Heart right ventricle (tissue), 16 donors: ENCODE measurements at regions of chr4 and their contacts with region 1.

Region 1: DNA sequence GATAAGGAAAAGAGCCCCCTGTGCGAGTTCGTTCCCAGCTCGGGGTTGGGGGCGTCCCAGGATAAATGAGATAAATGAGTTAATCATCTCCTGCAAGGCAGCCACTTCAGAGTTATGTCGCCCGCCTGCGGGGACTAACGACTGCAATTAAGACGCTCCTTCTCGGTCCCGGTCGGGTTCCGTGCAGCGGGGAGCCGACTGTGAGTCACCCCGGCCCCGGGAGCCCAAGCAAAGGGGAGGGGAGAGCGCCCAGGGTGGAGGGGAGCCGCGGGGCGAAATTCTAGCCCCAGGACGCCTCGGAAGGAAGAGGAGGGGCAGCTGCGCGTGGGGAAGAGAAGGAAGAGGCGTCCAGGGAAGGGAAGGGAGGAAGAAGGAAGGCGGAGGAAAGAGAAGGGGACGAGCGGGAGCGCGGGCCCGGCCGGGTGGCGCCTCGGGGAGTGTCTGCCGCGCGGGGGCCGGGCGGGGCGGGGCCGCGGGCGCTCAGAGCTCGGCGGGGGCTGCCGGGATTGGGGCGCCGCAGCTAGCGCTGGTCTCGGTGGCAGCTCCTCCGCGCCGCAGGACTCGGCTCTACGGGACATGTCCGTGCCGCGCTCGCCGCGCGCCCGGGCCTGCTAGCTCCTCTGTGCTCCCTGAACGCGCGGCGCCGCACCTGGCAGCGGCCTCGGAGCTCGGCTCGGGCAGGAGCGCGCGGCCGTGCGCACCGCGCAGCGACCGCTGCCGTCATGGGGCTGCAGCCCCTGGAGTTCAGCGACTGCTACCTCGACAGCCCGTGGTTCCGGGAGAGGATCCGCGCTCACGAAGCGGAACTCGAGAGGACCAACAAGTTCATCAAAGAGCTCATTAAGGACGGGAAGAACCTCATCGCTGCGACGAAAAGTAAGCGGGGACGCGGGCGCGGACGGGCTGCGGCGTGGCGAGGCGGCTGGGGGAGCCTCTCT is at the start of gene ARHGAP10:
- DNase-seq: peak; percentile 67 to 81
- ATAC-seq: peak; percentile 72 to 90 (median 84)
- H3K4me3 ChIP-seq: peak within 1 kb of the TSS; percentile 44 to 93 (median 78)
- H3K27ac ChIP-seq: peak within 1 kb of the TSS; percentile 86 to 95 (median 92)
- H3K4me1 ChIP-seq: peaks cover 0 to 54% (median 23%) of the 10 kb centered on the region in 9 donors
- H3K27me3 ChIP-seq: peaks cover 0 to 5% (median 0%) of the 10 kb centered on the region in 7 donors
- CTCF ChIP-seq: no peak
- total RNA-seq, gene ARHGAP10: 33.9 to 71.1 (median 60.7) TPM

Region 2: DNA sequence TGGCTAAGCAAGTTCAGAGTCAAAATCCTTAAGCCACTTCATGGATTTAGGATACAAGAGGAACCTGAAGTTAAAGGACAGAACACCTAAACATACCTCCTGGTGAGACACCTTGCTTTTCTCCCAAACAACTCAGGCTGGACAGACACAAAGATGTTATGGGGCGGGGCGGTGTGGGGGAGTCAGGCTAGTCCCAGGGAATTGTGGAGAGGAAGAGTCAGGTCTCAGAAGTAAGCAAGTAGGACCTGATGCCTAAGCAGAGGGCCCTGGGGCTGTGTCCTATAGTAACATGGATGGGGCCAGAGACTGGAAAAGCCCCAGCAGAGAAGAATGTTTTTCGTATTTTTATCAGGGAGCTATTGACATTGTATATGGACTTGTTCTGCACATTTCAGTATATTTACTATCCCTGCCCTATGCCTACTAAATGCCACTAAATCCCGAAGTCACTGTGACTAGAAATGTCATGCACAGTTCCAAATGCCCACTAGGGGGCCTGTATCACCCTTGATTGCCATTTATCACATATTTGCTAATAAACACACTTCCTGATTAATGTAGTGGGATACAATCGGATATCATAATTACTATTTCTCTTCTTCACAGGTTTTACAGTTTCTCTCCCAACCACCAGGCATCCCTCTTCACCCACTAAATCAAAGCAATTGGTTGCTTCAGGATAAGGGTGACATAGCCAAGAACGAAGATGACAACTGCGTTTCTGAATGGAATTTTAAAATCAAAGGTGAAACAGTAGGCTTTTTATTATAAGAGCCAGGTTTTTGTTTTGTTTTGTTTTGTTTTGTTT is 23.8 kb before region 1 on chr4:
- intact Hi-C with region 1: loop called in 1 of 10 experiments (anchors 1 kb)
- DNase-seq: peak in 1 of 2 donors; percentile 43
- ATAC-seq: peak; percentile 54 to 75 (median 64)
- H3K4me3 ChIP-seq: peak overlapping the region in 2 of 10 donors; percentile 16 to 25
- H3K27ac ChIP-seq: no peak overlapping the region
- H3K4me1 ChIP-seq: peaks cover 0 to 8% (median 0%) of the 10 kb centered on the region in 9 donors
- H3K27me3 ChIP-seq: no peaks in the 10 kb centered on the region
- CTCF ChIP-seq: peak; percentile 80 to 90 (median 86)

Region 3: DNA sequence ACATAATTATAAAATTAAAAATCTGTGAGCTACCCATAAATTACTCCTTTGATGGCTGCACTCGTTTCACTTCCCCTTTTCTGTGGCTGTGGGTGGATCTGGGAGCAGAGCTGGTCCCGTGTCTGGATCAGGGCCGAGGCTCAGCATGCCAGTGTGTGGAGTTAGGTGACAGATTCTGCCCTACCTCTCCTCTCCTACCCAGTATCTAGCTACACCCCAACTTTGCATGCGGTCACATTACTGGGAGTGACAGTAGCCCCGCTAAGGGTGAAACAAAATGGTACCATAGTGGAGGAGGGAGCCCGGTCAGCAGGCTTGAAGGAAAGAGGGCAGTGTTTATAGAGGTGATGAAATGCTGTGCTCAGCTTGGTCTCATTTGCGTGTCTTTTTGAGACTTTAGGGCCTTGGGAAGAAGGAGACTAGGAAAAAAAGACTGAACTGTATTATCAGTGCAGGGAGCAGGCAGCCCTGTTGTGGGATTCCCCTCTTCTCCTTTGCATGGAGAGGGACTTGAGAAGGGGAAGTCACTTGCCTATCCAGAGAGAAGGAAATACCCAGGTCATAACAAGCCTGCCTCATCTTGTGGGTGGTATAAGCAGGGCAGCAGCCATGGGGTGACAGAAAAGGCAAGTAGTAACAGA is 48.4 kb after region 1 on chr4:
- intact Hi-C with region 1: loop called in 2 of 10 experiments (anchors 5 to 10 kb)
- DNase-seq: no peak
- ATAC-seq: peak; percentile 13 to 59 (median 50)
- H3K4me3 ChIP-seq: peak overlapping the region in 1 of 10 donors; percentile 27
- H3K27ac ChIP-seq: peak overlapping the region in 3 of 10 donors; percentile 43 to 85 (median 58)
- H3K4me1 ChIP-seq: peaks cover 6 to 71% (median 51%) of the 10 kb centered on the region in 9 donors
- H3K27me3 ChIP-seq: no peaks in the 10 kb centered on the region
- CTCF ChIP-seq: no peak

Region 4: DNA sequence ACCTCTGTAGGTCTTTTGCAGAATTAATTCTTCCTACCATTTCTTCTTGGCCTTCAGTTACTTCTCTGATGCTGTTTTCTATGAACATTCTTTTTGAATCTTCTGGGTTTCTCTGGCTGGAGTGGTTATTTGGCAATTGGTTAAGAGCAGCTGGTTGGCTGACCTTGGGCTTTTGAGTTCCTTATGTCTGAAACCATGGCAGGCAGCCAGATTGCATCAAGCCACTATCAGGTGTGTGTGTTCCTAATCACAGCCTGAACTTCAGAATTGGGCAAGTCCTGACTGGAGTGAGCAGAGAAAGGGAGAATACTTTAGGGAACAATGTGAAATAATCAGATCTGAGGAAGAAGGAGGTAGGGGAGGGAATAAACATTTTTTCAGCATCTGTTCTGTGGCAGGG is 90.3 kb after region 1 on chr4:
- intact Hi-C with region 1: loop called in 2 of 10 experiments (anchors 5 kb)
- DNase-seq: peak; percentile 63 to 84
- ATAC-seq: peak; percentile 53 to 85 (median 72)
- H3K4me3 ChIP-seq: no peak overlapping the region
- H3K27ac ChIP-seq: peak overlapping the region; percentile 48 to 93 (median 68)
- H3K4me1 ChIP-seq: peaks cover 5 to 88% (median 60%) of the 10 kb centered on the region in 9 donors
- H3K27me3 ChIP-seq: no peaks in the 10 kb centered on the region
- CTCF ChIP-seq: peak in 1 of 9 donors; percentile 7

Region 5: DNA sequence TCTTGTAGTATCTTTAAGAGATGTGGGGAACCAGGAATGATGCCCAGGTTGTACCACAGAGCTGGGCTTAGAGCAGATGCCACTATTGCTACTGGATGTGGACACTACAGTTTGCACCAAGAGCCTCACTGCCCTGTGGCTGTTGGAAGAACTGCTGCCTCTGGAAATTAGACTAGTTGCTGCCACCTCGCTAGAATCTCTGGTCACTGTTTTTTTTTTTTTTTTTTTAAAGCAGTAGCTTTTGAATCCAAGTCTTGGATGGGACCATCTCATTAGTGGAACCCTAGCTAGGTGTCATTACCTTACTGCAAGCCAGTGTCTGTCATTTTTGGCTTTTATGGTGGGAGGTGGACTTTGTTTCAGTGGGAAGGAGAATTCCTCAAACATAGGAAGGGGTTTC is 105.6 kb after region 1 on chr4:
- intact Hi-C with region 1: loop called in 5 of 10 experiments (anchors 5 to 10 kb)
- DNase-seq: no peak
- ATAC-seq: peak in 5 of 8 donors; percentile 48 to 71 (median 64)
- H3K4me3 ChIP-seq: no peak overlapping the region
- H3K27ac ChIP-seq: peak overlapping the region in 4 of 10 donors; percentile 47 to 69 (median 58)
- H3K4me1 ChIP-seq: peaks cover 2 to 66% (median 45%) of the 10 kb centered on the region in 9 donors
- H3K27me3 ChIP-seq: no peaks in the 10 kb centered on the region
- CTCF ChIP-seq: peak in 6 of 9 donors; percentile 18 to 46 (median 28)

Region 6: GRCh38 chr4:147866532-147867271 is 134.9 kb after region 1 on chr4:
- intact Hi-C with region 1: loop called in 3 of 10 experiments (anchors 5 kb)
- DNase-seq: peak; percentile 88 to 94
- ATAC-seq: peak; percentile 85 to 92 (median 89)
- H3K4me3 ChIP-seq: no peak overlapping the region
- H3K27ac ChIP-seq: peak overlapping the region in 2 of 10 donors; percentile 9 to 38
- H3K4me1 ChIP-seq: peaks cover 0 to 47% (median 27%) of the 10 kb centered on the region in 9 donors
- H3K27me3 ChIP-seq: no peaks in the 10 kb centered on the region
- CTCF ChIP-seq: peak; percentile 99 to 100 (median 100)